ENCODE measurements at regions of chr17 and their contacts with region 1.

Region 1: DNA sequence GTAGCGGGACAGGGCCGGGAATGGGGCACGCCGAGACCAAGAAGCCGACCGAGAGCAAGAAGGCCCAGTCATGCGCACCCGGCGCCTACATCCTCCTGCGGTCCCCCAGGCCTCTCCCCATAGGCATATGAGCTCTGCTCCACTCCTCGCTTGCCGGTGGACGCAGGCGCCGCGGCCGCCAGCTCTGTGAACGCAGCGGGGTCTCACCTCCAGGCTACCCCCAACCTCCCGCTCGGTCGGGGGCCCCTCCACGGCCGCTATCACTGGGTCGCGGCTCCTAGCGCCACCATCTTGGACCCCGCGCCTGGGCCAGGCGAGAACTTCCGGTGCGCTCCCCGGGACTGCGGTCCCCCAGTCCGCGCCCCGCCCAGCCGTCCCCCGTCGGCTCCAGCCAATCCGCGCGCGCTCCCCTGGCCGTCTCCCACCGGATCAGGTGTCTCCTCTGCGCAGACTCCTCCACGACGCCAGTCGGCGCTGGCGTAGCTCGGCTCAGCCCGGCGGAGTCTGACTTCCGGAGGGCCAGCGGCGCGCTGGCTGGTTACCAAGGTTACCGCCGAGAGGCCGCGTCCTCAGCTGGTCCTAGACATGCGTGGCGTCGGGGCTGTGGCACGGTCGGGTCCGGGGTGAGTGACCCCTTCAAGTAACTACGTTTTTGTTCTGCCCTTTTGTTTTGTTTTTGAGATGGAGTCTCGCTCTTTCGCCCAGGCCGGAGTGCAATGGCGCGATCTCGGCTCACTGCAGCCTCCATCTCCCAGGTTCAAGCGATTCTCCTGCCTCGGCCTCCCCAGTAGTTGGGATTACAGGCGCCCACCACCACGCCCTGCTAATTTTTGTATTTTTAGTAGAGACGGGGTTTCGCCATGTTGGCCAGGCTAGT is at the start of gene ZNF594:
- DNase-seq: peak; percentile 96
- ATAC-seq: peak; percentile 99
- H3K4me3 Mint-ChIP-seq: peak within 1 kb of the TSS; percentile 94
- H3K27ac Mint-ChIP-seq: peak within 1 kb of the TSS; percentile 90
- H3K4me1 Mint-ChIP-seq: peaks cover 32% of the 10 kb centered on the region
- H3K27me3 Mint-ChIP-seq: no peaks in the 10 kb centered on the region
- CTCF ChIP-seq: no peak
- total RNA-seq, gene ZNF594: 20.4 and 26.8 TPM in 2 replicates

Region 2: DNA sequence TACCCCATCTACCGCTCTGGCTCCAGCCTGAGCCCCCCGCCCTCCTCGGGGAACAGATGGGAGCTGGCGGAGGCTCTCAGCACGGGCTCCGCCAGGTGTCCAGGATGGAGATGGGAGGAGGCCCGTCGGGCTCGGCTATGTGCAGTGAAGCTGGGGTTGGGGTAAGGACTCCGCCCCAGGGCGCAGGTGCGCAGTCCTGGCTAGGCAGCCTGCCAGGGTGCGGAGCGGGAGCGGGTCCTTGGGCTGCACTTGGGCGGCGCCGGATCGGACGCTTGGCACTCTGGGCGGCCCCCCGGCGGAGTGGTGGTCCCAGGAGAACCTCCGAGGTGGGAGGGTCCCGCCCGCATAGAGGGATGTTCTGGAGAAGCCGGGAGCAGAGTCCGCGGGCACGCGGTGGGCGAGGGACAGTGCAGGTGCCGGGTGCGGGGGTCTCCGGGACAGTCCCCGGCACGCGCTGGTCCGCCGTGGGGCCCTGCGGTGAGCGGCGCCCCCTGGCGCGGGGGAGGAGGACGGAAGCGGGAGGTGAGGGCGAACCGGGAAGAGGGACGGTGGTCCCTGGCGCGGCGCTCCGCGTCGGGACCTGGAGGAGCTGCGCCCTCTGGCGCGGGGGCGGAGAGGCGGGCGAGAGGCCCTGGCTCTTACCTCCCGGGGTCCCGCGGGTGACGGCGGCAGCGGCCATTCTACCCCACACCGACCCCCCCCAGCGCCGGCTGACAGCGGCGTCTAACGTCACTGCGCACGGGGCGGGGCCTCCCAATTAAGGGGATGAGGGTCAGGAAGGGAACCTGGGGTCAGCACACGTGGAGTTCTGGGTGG is 204.6 kb before region 1 on chr17 and contains the start of gene CAMTA2:
- CTCF ChIA-PET with region 1: no interaction called
- POLR2A ChIA-PET with region 1: no interaction called
- intact Hi-C with region 1: loop called (anchors 5 kb)
- DNase-seq: peak; percentile 88
- ATAC-seq: peak; percentile 80
- H3K4me3 Mint-ChIP-seq: peak within 1 kb of the TSS; percentile 92
- H3K27ac Mint-ChIP-seq: peak within 1 kb of the TSS; percentile 93
- H3K4me1 Mint-ChIP-seq: peaks cover 32% of the 10 kb centered on the region
- H3K27me3 Mint-ChIP-seq: no peaks in the 10 kb centered on the region
- CTCF ChIP-seq: no peak
- total RNA-seq, gene CAMTA2: 45.9 and 57.9 TPM in 2 replicates

Region 3: GRCh38 chr17:5097101-5097834 is 94.5 kb before region 1 on chr17:
- CTCF ChIA-PET with region 1: no interaction called
- POLR2A ChIA-PET with region 1: interaction called, 8 read pairs
- intact Hi-C with region 1: loop called (anchors 5 kb)
- DNase-seq: peak; percentile 60
- ATAC-seq: peak; percentile 93
- H3K4me3 Mint-ChIP-seq: peak overlapping the region; percentile 94
- H3K27ac Mint-ChIP-seq: peak overlapping the region; percentile 91
- H3K4me1 Mint-ChIP-seq: peaks cover 12% of the 10 kb centered on the region
- H3K27me3 Mint-ChIP-seq: no peaks in the 10 kb centered on the region
- CTCF ChIP-seq: no peak

Region 4: GRCh38 chr17:5138616-5139457 is 52.9 kb before region 1 on chr17:
- CTCF ChIA-PET with region 1: no interaction called
- POLR2A ChIA-PET with region 1: no interaction called
- intact Hi-C with region 1: no loop called
- DNase-seq: no peak
- ATAC-seq: no peak
- H3K4me3 Mint-ChIP-seq: no peak overlapping the region
- H3K27ac Mint-ChIP-seq: no peak overlapping the region
- H3K4me1 Mint-ChIP-seq: no peaks in the 10 kb centered on the region
- H3K27me3 Mint-ChIP-seq: peaks cover 3% of the 10 kb centered on the region
- CTCF ChIP-seq: no peak

Region 5: GRCh38 chr17:5181509-5182305 is 10.1 kb before region 1 on chr17:
- CTCF ChIA-PET with region 1: no interaction called
- POLR2A ChIA-PET with region 1: interaction called, 17 read pairs
- intact Hi-C with region 1: no loop called
- DNase-seq: no peak
- ATAC-seq: no peak
- H3K4me3 Mint-ChIP-seq: no peak overlapping the region
- H3K27ac Mint-ChIP-seq: peak overlapping the region; percentile 37
- H3K4me1 Mint-ChIP-seq: no peaks in the 10 kb centered on the region
- H3K27me3 Mint-ChIP-seq: no peaks in the 10 kb centered on the region
- CTCF ChIP-seq: no peak

Region 6: GRCh38 chr17:5237541-5238016 is 45.8 kb after region 1 on chr17:
- CTCF ChIA-PET with region 1: interaction called, 127 read pairs
- POLR2A ChIA-PET with region 1: interaction called, 28 read pairs
- intact Hi-C with region 1: no loop called
- DNase-seq: no peak
- ATAC-seq: peak; percentile 18
- H3K4me3 Mint-ChIP-seq: peak overlapping the region; percentile 36
- H3K27ac Mint-ChIP-seq: peak overlapping the region; percentile 98
- H3K4me1 Mint-ChIP-seq: peaks cover 78% of the 10 kb centered on the region
- H3K27me3 Mint-ChIP-seq: no peaks in the 10 kb centered on the region
- CTCF ChIP-seq: no peak

Region 7: DNA sequence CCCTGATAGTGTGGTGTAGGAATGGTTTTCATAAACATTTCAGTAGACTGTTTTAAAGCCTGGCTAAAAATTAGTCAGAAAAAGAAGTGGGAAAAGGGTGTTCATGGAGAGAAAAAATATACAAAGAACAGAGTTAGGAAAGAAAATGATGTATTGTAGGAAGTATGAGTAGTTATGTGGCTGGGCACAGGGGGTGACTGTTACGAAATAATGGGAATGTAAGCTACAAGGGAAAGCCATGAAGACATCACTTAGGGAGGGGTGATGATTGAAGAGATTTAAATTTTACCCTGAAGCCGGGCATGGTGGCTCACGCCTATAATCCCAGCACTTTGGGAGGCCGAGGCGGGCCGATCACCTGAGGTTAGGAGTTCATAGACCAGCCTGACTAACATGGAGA is 172.4 kb after region 1 on chr17:
- CTCF ChIA-PET with region 1: no interaction called
- POLR2A ChIA-PET with region 1: no interaction called
- intact Hi-C with region 1: loop called (anchors 10 kb)
- DNase-seq: no peak
- ATAC-seq: no peak
- H3K4me3 Mint-ChIP-seq: no peak overlapping the region
- H3K27ac Mint-ChIP-seq: no peak overlapping the region
- H3K4me1 Mint-ChIP-seq: peaks cover 2% of the 10 kb centered on the region
- H3K27me3 Mint-ChIP-seq: no peaks in the 10 kb centered on the region
- CTCF ChIP-seq: no peak

Region 8: GRCh38 chr17:5468075-5468473 is 276.3 kb after region 1 on chr17:
- CTCF ChIA-PET with region 1: no interaction called
- POLR2A ChIA-PET with region 1: interaction called, 4 read pairs
- intact Hi-C with region 1: loop called (anchors 2 kb)
- DNase-seq: no peak
- ATAC-seq: no peak
- H3K4me3 Mint-ChIP-seq: peak overlapping the region; percentile 85
- H3K27ac Mint-ChIP-seq: peak overlapping the region; percentile 47
- H3K4me1 Mint-ChIP-seq: peaks cover 37% of the 10 kb centered on the region
- H3K27me3 Mint-ChIP-seq: no peaks in the 10 kb centered on the region
- CTCF ChIP-seq: no peak

Measured in activated B cell treated with CpG ODN at 0.5 μM for 24 hours (primary cell).